ENCODE measurements at regions of chr18 and their contacts with region 1.

Region 1: GRCh38 chr18:23994361-23994902 is 20.1 kb upstream of the TTC39C start:
- DNase-seq: peak in 1 of 9 donors; percentile 11
- ATAC-seq: no peak
- H3K4me3 ChIP-seq: no peak overlapping the region
- H3K4me3 Mint-ChIP-seq: peak overlapping the region in 6 of 10 donors; percentile 16 to 63 (median 43)
- H3K27ac ChIP-seq: no peak overlapping the region
- H3K27ac Mint-ChIP-seq: peak overlapping the region in 8 of 9 donors; percentile 59 to 96 (median 70)
- H3K4me1 ChIP-seq: peaks cover 31 to 60% of the 10 kb centered on the region in 2 donors
- H3K4me1 Mint-ChIP-seq: peaks cover 15 to 60% (median 54%) of the 10 kb centered on the region in 7 donors
- H3K27me3 ChIP-seq: no peaks in the 10 kb centered on the region
- H3K27me3 Mint-ChIP-seq: peaks cover 0 to 6% (median 0%) of the 10 kb centered on the region in 5 donors

Region 2: DNA sequence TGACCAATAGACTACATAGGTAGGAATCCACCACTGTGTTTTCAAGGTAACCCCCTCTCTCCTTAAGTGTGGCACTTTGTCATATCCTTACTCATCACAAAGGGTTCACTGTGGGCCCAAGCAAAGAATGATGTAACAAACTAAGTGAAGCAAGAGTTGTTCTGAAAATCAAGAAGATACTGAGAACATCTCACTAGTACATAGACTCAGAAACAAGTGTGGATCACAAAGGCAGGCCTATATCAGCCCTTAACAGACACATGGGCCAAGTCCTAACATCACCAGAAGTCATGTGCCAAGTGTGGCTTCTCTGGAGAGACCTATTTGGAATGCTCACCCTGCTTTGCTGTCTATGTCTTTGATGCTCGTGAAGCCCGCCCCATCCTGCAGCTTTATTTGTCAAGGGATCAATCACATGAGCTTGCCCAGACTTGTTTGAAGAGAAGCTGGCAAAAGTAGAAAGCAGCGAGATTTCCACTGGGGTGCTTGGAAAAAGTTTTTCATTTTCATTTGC is 111.1 kb before region 1 on chr18:
- CTCF ChIA-PET with region 1: no interaction called
- POLR2A ChIA-PET with region 1: no interaction called
- intact Hi-C with region 1: no loop called
- DNase-seq: no peak
- ATAC-seq: no peak
- H3K4me3 ChIP-seq: no peak overlapping the region
- H3K4me3 Mint-ChIP-seq: no peak overlapping the region
- H3K27ac ChIP-seq: no peak overlapping the region
- H3K27ac Mint-ChIP-seq: no peak overlapping the region
- H3K4me1 ChIP-seq: peaks cover 0 to 11% of the 10 kb centered on the region in 2 donors
- H3K4me1 Mint-ChIP-seq: peaks cover 17 to 44% (median 30%) of the 10 kb centered on the region in 7 donors
- H3K27me3 ChIP-seq: no peaks in the 10 kb centered on the region
- H3K27me3 Mint-ChIP-seq: peaks cover 0 to 10% (median 0%) of the 10 kb centered on the region in 5 donors

Region 3: GRCh38 chr18:23935804-23936203 is 58.6 kb before region 1 on chr18:
- CTCF ChIA-PET with region 1: interaction called, 3 read pairs
- POLR2A ChIA-PET with region 1: interaction called, 4 read pairs
- intact Hi-C with region 1: loop called in 1 of 2 experiments (anchors 5 kb)
- DNase-seq: peak in 6 of 9 donors; percentile 5 to 44 (median 26)
- ATAC-seq: no peak
- H3K4me3 ChIP-seq: no peak overlapping the region
- H3K4me3 Mint-ChIP-seq: peak overlapping the region; percentile 22 to 68 (median 62)
- H3K27ac ChIP-seq: no peak overlapping the region
- H3K27ac Mint-ChIP-seq: peak overlapping the region in 7 of 9 donors; percentile 21 to 89 (median 54)
- H3K4me1 ChIP-seq: peaks cover 39 to 42% of the 10 kb centered on the region in 2 donors
- H3K4me1 Mint-ChIP-seq: peaks cover 27 to 71% (median 56%) of the 10 kb centered on the region in 7 donors
- H3K27me3 ChIP-seq: no peaks in the 10 kb centered on the region
- H3K27me3 Mint-ChIP-seq: peaks cover 0 to 11% (median 0%) of the 10 kb centered on the region in 5 donors

Region 4: GRCh38 chr18:23982155-23983079 is 12.0 kb before region 1 on chr18:
- CTCF ChIA-PET with region 1: interaction called, 3 read pairs
- POLR2A ChIA-PET with region 1: interaction called, 14 read pairs
- intact Hi-C with region 1: loop called in 1 of 2 experiments (anchors 1 kb)
- DNase-seq: no peak
- ATAC-seq: no peak
- H3K4me3 ChIP-seq: no peak overlapping the region
- H3K4me3 Mint-ChIP-seq: no peak overlapping the region
- H3K27ac ChIP-seq: no peak overlapping the region
- H3K27ac Mint-ChIP-seq: peak overlapping the region in 5 of 9 donors; percentile 17 to 85 (median 23)
- H3K4me1 ChIP-seq: peaks cover 10 to 18% of the 10 kb centered on the region in 2 donors
- H3K4me1 Mint-ChIP-seq: peaks cover 14 to 40% (median 32%) of the 10 kb centered on the region in 7 donors
- H3K27me3 ChIP-seq: no peaks in the 10 kb centered on the region
- H3K27me3 Mint-ChIP-seq: peaks cover 0 to 4% (median 0%) of the 10 kb centered on the region in 5 donors

Region 5: GRCh38 chr18:24006712-24007313 is 12.4 kb after region 1 on chr18:
- CTCF ChIA-PET with region 1: interaction called, 4 read pairs
- POLR2A ChIA-PET with region 1: interaction called, 11 read pairs
- intact Hi-C with region 1: loop called (anchors 1 kb)
- DNase-seq: no peak
- ATAC-seq: no peak
- H3K4me3 ChIP-seq: no peak overlapping the region
- H3K4me3 Mint-ChIP-seq: no peak overlapping the region
- H3K27ac ChIP-seq: no peak overlapping the region
- H3K27ac Mint-ChIP-seq: peak overlapping the region in 8 of 9 donors; percentile 15 to 94 (median 75)
- H3K4me1 ChIP-seq: peaks cover 52 to 94% of the 10 kb centered on the region in 2 donors
- H3K4me1 Mint-ChIP-seq: peaks cover 39 to 89% (median 81%) of the 10 kb centered on the region in 7 donors
- H3K27me3 ChIP-seq: no peaks in the 10 kb centered on the region
- H3K27me3 Mint-ChIP-seq: no peaks in the 10 kb centered on the region

Region 6: GRCh38 chr18:24231773-24232735 is 237.6 kb after region 1 on chr18:
- CTCF ChIA-PET with region 1: no interaction called
- POLR2A ChIA-PET with region 1: no interaction called
- intact Hi-C with region 1: no loop called
- DNase-seq: no peak
- ATAC-seq: no peak
- H3K4me3 ChIP-seq: no peak overlapping the region
- H3K4me3 Mint-ChIP-seq: no peak overlapping the region
- H3K27ac ChIP-seq: no peak overlapping the region
- H3K27ac Mint-ChIP-seq: no peak overlapping the region
- H3K4me1 ChIP-seq: no peaks in the 10 kb centered on the region
- H3K4me1 Mint-ChIP-seq: peaks cover 0 to 3% (median 0%) of the 10 kb centered on the region in 7 donors
- H3K27me3 ChIP-seq: no peaks in the 10 kb centered on the region
- H3K27me3 Mint-ChIP-seq: peaks cover 0 to 5% (median 0%) of the 10 kb centered on the region in 5 donors

Measured in naive thymus-derived CD4-positive, alpha-beta T cell (primary cell).